ENCODE measurements at regions of chr3 and their contacts with region 1.

Region 1: DNA sequence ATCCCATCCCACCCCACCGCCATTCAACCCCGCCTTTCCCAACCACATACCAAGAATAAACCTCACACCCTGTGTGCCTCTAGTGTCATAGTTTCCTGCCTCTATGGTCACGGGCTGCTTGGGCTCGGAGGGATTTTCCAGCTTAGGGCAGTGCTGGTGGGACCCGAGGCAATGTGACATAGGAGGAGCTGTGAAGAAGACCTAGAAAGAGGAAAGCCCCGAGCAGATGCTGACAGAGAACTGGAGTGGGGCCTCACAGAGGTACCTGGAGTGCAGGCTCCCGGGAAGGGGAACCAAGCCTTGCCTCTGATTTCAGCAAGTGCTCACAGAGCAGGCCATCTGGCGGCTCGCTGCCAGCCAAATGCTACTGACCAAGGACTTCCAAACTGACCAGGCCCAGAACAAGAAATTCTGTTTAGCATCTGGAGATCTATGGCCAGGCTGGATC is 27.5 kb downstream of the BHLHE40 start:
- DNase-seq: peak; percentile 95
- H3K4me3 Mint-ChIP-seq: peak overlapping the region; percentile 44
- H3K27ac Mint-ChIP-seq: peak overlapping the region; percentile 76
- H3K4me1 Mint-ChIP-seq: peaks cover 42% of the 10 kb centered on the region
- H3K27me3 Mint-ChIP-seq: peaks cover 7% of the 10 kb centered on the region

Region 2: GRCh38 chr3:4986782-4987537 is 19.8 kb before region 1 on chr3:
- CTCF ChIA-PET with region 1: interaction called, 9 read pairs
- intact Hi-C with region 1: loop called (anchors 1 kb)
- DNase-seq: peak; percentile 80
- H3K4me3 Mint-ChIP-seq: peak overlapping the region; percentile 71
- H3K27ac Mint-ChIP-seq: peak overlapping the region; percentile 65
- H3K4me1 Mint-ChIP-seq: peaks cover 55% of the 10 kb centered on the region
- H3K27me3 Mint-ChIP-seq: no peaks in the 10 kb centered on the region

Region 3: DNA sequence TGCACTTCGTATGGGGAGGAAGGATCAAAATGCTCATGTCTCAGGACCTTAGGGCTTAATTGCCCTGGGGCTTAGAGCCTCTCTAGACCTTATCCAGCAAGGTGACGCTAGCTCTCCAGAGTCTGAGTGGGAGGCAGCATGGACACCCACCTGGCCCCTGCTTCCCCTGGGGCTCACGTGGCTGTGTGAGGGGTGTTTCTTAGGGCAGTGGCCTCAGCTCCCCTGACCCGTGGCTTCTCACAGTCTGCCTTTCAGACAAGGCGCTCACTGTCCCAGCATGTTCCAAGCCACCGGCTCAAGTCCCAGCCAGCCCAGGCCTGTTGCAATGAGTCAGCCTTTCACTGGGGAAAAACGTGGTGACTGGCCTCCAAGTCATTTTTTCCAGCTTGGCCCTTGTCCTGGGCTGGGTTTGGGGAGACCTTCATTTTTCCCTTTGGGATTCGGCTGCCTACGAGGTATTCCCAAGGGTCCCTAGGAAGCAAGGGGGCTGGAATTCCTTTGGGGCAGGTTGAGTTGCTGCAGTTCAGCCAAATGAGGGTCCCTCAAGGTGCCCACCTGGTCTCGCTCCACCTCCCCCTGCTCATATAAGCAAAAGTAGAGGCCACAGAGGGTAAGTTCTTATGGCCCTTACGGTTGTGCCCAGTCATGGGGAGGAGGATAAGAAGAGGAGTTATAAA is 11.8 kb before region 1 on chr3:
- CTCF ChIA-PET with region 1: interaction called, 3 read pairs
- intact Hi-C with region 1: loop called (anchors 1 kb)
- DNase-seq: peak; percentile 6
- H3K4me3 Mint-ChIP-seq: no peak overlapping the region
- H3K27ac Mint-ChIP-seq: no peak overlapping the region
- H3K4me1 Mint-ChIP-seq: peaks cover 16% of the 10 kb centered on the region
- H3K27me3 Mint-ChIP-seq: no peaks in the 10 kb centered on the region

Region 4: GRCh38 chr3:5036858-5037257 is 30.1 kb after region 1 on chr3:
- CTCF ChIA-PET with region 1: no interaction called
- intact Hi-C with region 1: no loop called
- DNase-seq: no peak
- H3K4me3 Mint-ChIP-seq: no peak overlapping the region
- H3K27ac Mint-ChIP-seq: no peak overlapping the region
- H3K4me1 Mint-ChIP-seq: peaks cover 7% of the 10 kb centered on the region
- H3K27me3 Mint-ChIP-seq: no peaks in the 10 kb centered on the region

Region 5: GRCh38 chr3:5187156-5187919 is 180.6 kb after region 1 on chr3 and contains the start of gene EDEM1:
- CTCF ChIA-PET with region 1: no interaction called
- intact Hi-C with region 1: loop called (anchors 1 kb)
- DNase-seq: peak; percentile 95
- H3K4me3 Mint-ChIP-seq: peak within 1 kb of the TSS; percentile 96
- H3K27ac Mint-ChIP-seq: peak within 1 kb of the TSS; percentile 99
- H3K4me1 Mint-ChIP-seq: peaks cover 27% of the 10 kb centered on the region
- H3K27me3 Mint-ChIP-seq: no peaks in the 10 kb centered on the region
- total RNA-seq, gene EDEM1: 137 to 138 TPM

Region 6: DNA sequence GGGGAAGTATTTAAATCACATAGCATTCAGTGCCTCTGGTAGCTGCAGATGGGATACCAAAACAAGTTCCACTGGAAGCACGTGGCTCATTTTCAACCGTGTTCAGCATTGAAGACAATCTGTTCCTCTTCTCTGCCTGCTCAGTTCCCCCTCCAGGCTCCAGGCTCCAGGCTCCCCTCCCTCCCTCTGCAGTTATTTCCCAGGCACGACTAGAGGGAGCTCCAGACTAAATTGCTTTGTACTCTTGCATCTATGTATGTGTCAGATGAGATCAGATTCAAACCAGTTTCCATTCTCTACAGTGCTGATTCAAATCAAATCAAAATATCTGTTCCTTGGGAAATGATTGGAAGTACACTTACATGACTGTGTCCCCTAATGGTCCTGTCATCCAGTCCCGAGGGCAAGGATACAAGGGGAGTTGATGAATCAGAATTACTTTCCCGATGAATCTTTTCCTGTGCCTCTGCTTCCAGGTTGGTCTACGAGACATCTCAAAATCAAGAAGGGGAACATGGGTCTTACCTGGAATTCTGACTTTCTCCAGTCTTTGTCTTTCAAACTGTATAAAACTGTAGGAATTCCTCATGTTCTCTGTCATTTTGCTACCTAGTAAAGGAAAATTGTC is 781.2 kb after region 1 on chr3:
- CTCF ChIA-PET with region 1: no interaction called
- intact Hi-C with region 1: no loop called
- DNase-seq: no peak
- H3K4me3 Mint-ChIP-seq: no peak overlapping the region
- H3K27ac Mint-ChIP-seq: no peak overlapping the region
- H3K4me1 Mint-ChIP-seq: no peaks in the 10 kb centered on the region
- H3K27me3 Mint-ChIP-seq: no peaks in the 10 kb centered on the region

Measured in activated naive CD4-positive, alpha-beta T cell treated with anti-CD3 and anti-CD28 coated beads for 36 hours (primary cell).